ENCODE measurements at regions of chr6 and their contacts with region 1.

Region 1: DNA sequence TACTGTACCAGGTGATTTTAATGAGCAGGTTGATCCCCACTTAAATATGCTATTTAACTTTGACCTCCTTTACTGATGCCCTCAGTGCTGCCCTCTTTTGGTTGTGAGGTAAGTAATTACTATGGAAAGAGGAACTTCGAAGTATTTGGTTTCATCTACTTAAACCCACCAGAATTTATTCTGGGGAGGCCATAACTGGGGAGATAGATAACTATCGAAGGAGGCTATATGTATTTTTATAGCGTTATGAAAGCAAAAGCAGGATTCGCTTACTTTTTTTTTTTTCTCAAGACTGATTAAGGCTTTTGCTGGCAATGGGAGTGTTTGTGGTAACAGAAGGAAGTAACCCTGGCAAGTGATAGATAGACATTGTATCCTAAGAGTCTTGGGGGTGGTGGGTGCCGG is 168.9 kb upstream of the CENPW start:
- DNase-seq: peak; percentile 52
- ATAC-seq: peak; percentile 82
- H3K4me3 ChIP-seq: no peak overlapping the region
- H3K27ac ChIP-seq: no peak overlapping the region
- H3K4me1 ChIP-seq: no peaks in the 10 kb centered on the region
- H3K27me3 ChIP-seq: no peaks in the 10 kb centered on the region
- CTCF ChIP-seq: peak; percentile 57
- EP300 ChIP-seq: no peak
- POLR2A ChIP-seq: no peak
- RAD21 ChIP-seq: peak; percentile 13; the same call in 1 of the 2 replicates

Region 2: DNA sequence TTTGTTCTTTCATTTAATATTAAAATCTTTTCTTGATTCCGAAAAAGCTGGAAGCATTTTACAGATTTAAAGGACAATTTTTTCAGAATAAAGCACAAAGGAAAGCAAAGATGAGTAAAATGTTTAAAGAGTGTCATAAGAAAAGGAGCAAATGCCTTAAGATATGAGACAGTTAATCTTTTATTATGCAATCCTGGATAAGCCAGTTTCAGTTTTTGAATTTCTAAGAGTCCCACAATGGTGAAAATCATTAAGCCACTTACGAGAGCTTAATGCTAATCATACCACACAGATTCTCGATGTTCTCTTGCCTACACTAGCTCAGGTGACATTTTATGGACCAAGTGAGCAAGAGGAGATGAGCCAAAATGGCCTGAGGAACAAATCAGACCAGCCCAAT is 1312.4 kb before region 1 on chr6:
- CTCF ChIA-PET with region 1: no interaction called
- POLR2A ChIA-PET with region 1: no interaction called
- in situ Hi-C with region 1: no loop called
- intact Hi-C with region 1: no loop called
- DNase-seq: no peak
- ATAC-seq: no peak
- H3K4me3 ChIP-seq: no peak overlapping the region
- H3K27ac ChIP-seq: no peak overlapping the region
- H3K4me1 ChIP-seq: no peaks in the 10 kb centered on the region
- H3K27me3 ChIP-seq: no peaks in the 10 kb centered on the region; a peak in 1 of 5 replicates
- CTCF ChIP-seq: no peak
- EP300 ChIP-seq: no peak
- POLR2A ChIP-seq: no peak
- RAD21 ChIP-seq: no peak

Region 3: DNA sequence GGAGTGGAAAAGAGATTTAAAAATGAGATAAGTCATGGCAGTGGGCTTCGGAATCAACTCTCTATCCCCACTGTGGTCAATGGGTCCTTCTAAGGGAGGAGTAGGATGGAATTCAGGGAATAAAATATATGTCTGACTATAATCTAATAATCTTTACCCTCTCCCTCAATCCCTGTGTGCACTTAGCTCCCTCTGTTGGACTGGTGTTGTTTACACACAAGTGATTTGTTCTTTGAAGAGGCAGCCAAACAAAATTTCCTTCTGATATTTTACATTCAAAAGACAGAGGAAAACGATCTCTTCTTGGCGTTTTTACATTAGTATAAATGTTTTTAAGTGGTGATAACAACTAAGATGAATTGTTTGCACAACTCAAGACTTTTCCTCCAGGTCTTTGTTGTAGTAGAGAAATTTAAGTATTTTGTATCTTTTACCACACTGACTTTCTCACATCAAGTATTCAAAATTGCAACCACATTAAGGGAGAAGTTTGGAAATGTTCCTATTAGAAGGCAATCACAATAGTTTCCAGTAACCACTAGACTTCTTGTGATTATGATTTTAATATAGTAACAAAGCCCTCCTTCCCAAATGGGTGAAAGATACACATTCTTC is 486.7 kb after region 1 on chr6:
- CTCF ChIA-PET with region 1: no interaction called
- POLR2A ChIA-PET with region 1: no interaction called
- in situ Hi-C with region 1: loop called (anchors 10 kb)
- intact Hi-C with region 1: no loop called
- DNase-seq: peak; percentile 20
- ATAC-seq: peak; percentile 73
- H3K4me3 ChIP-seq: no peak overlapping the region
- H3K27ac ChIP-seq: no peak overlapping the region
- H3K4me1 ChIP-seq: no peaks in the 10 kb centered on the region
- H3K27me3 ChIP-seq: no peaks in the 10 kb centered on the region
- CTCF ChIP-seq: peak; percentile 65
- EP300 ChIP-seq: no peak
- POLR2A ChIP-seq: no peak
- RAD21 ChIP-seq: peak; percentile 41